ENCODE measurements at regions of chr1 and their contacts with region 1.

Region 1: DNA sequence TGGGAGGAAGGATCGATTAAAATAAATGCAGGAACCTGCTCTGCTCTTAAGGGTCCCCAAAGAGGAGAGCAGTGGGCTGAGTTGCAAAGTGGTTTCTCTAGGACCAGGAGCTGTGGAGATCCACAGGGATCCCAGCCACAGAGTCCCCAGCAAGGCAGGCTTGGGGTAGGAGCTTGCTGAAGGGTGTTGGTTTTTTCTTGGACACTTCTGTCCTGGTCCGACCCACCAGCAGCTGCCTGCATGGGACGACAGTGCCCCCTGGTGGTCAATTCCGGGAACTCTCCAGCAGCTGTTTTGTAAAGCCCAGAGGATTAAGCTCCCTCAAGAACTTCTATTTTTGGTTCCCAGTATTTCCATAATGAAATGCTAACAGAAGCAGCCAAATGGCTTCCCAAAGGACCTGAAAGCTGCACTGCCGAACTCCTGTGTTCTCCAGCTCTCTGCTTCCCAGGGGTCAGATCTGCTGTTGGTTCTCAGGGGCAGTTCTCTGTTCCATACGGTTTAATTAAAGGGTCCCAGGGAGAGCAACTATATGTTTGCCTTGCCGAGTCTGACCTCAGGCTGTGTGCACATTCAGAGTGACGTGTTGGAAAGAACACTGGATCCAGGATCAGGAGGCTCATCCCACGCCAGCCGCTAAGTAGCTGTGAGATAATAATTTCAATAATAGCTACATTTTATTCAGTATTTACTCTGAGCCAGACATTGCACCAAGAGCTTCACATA is 23.2 kb downstream of the NENF start:
- DNase-seq: peak; percentile 82
- H3K4me3 ChIP-seq: no peak overlapping the region
- H3K27ac ChIP-seq: no peak overlapping the region
- H3K4me1 ChIP-seq: no peaks in the 10 kb centered on the region
- H3K27me3 ChIP-seq: peaks cover 0 to 2% of the 10 kb centered on the region in 2 experiments
- CTCF ChIP-seq: peak; percentile 91
- POLR2A ChIP-seq: no peak

Region 2: GRCh38 chr1:212012034-212012740 is 443.8 kb before region 1 on chr1:
- CTCF ChIA-PET with region 1: interaction called, 19 read pairs
- POLR2A ChIA-PET with region 1: no interaction called
- dilution Hi-C with region 1: no loop called
- intact Hi-C with region 1: loop called (anchors 1 kb)
- DNase-seq: peak; percentile 70
- H3K4me3 ChIP-seq: no peak overlapping the region
- H3K27ac ChIP-seq: no peak overlapping the region
- H3K4me1 ChIP-seq: peaks cover 4% of the 10 kb centered on the region
- H3K27me3 ChIP-seq: no peaks in the 10 kb centered on the region
- CTCF ChIP-seq: peak; percentile 90 to 92
- POLR2A ChIP-seq: no peak

Region 3: GRCh38 chr1:212291505-212292134 is 164.3 kb before region 1 on chr1:
- CTCF ChIA-PET with region 1: interaction called, 15 read pairs
- POLR2A ChIA-PET with region 1: no interaction called
- dilution Hi-C with region 1: no loop called
- intact Hi-C with region 1: loop called (anchors 1 kb)
- DNase-seq: peak; percentile 62
- H3K4me3 ChIP-seq: no peak overlapping the region
- H3K27ac ChIP-seq: no peak overlapping the region
- H3K4me1 ChIP-seq: peaks cover 27% of the 10 kb centered on the region
- H3K27me3 ChIP-seq: no peaks in the 10 kb centered on the region
- CTCF ChIP-seq: peak; percentile 53 to 54
- POLR2A ChIP-seq: no peak

Region 4: GRCh38 chr1:212432706-212433576 is 23.0 kb before region 1 on chr1 and contains the start of gene NENF:
- CTCF ChIA-PET with region 1: interaction called, 18 read pairs
- POLR2A ChIA-PET with region 1: no interaction called
- dilution Hi-C with region 1: no loop called
- intact Hi-C with region 1: no loop called
- DNase-seq: peak; percentile 59
- H3K4me3 ChIP-seq: peak within 1 kb of the TSS; percentile 26 to 58 (median 53)
- H3K27ac ChIP-seq: no peak within 1 kb of the TSS
- H3K4me1 ChIP-seq: peaks cover 5% of the 10 kb centered on the region
- H3K27me3 ChIP-seq: peaks cover 12 to 14% of the 10 kb centered on the region in 2 experiments
- CTCF ChIP-seq: no peak
- POLR2A ChIP-seq: peak; percentile 78
- total RNA-seq, gene NENF: 20.5 and 23.0 TPM in 2 replicates

Region 5: GRCh38 chr1:212608209-212608955 is 152.4 kb after region 1 on chr1 and contains the start of gene ATF3:
- CTCF ChIA-PET with region 1: interaction called, 14 read pairs
- POLR2A ChIA-PET with region 1: interaction called, 5 read pairs
- dilution Hi-C with region 1: no loop called
- intact Hi-C with region 1: no loop called
- DNase-seq: peak; percentile 98
- H3K4me3 ChIP-seq: peak within 1 kb of the TSS; percentile 51 to 77 (median 52)
- H3K27ac ChIP-seq: peak within 1 kb of the TSS; percentile 76
- H3K4me1 ChIP-seq: peaks cover 27% of the 10 kb centered on the region
- H3K27me3 ChIP-seq: peaks cover 38 to 44% of the 10 kb centered on the region in 2 experiments
- CTCF ChIP-seq: no peak
- POLR2A ChIP-seq: peak; percentile 98
- total RNA-seq, gene ATF3: 6.1 and 10.7 TPM in 2 replicates

Region 6: GRCh38 chr1:212630158-212630900 is 174.4 kb after region 1 on chr1:
- CTCF ChIA-PET with region 1: no interaction called
- POLR2A ChIA-PET with region 1: no interaction called
- dilution Hi-C with region 1: no loop called
- intact Hi-C with region 1: no loop called
- DNase-seq: peak; percentile 42
- H3K4me3 ChIP-seq: no peak overlapping the region
- H3K27ac ChIP-seq: no peak overlapping the region
- H3K4me1 ChIP-seq: peaks cover 9% of the 10 kb centered on the region
- H3K27me3 ChIP-seq: peaks cover 0 to 6% of the 10 kb centered on the region in 2 experiments
- CTCF ChIP-seq: peak; percentile 73 to 86
- POLR2A ChIP-seq: no peak

Region 7: GRCh38 chr1:212879947-212880690 is 424.2 kb after region 1 on chr1:
- CTCF ChIA-PET with region 1: no interaction called
- POLR2A ChIA-PET with region 1: no interaction called
- dilution Hi-C with region 1: no loop called
- intact Hi-C with region 1: no loop called
- DNase-seq: no peak
- H3K4me3 ChIP-seq: no peak overlapping the region
- H3K27ac ChIP-seq: no peak overlapping the region
- H3K4me1 ChIP-seq: no peaks in the 10 kb centered on the region
- H3K27me3 ChIP-seq: no peaks in the 10 kb centered on the region
- CTCF ChIP-seq: no peak
- POLR2A ChIP-seq: no peak

Region 8: GRCh38 chr1:212994926-212995325 is 539.0 kb after region 1 on chr1:
- CTCF ChIA-PET with region 1: interaction called, 8 read pairs
- POLR2A ChIA-PET with region 1: no interaction called
- dilution Hi-C with region 1: no loop called
- intact Hi-C with region 1: loop called (anchors 1 kb)
- DNase-seq: no peak
- H3K4me3 ChIP-seq: no peak overlapping the region
- H3K27ac ChIP-seq: no peak overlapping the region
- H3K4me1 ChIP-seq: no peaks in the 10 kb centered on the region
- H3K27me3 ChIP-seq: no peaks in the 10 kb centered on the region
- CTCF ChIP-seq: no peak
- POLR2A ChIP-seq: no peak

Measured in endothelial cell of umbilical vein (primary cell).